ENCODE measurements at regions of chr12 and their contacts with region 1.

Region 1: DNA sequence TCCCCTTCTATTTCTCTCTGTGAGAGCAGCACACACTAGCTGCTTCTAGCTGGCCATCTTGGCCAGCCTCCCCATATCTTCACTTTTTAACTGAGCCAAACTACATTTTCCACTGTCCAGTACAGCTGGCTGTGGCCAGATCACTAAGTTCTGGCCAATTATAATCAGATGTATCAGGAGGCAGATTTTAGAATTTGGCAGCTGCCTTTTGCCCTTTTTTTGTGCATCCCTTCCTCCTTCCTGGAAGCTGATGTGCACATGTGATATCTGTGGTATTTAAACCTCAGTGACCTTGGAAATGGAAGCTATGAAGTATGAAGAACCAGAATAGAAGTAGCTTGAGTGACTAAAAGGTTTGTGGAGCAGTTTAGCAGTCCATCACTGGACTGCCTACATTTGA is 49.8 kb upstream of the ANO6 start:
- DNase-seq: no peak
- ATAC-seq: peak; percentile 12
- H3K4me3 ChIP-seq: no peak overlapping the region
- H3K27ac ChIP-seq: no peak overlapping the region
- H3K4me1 ChIP-seq: no peaks in the 10 kb centered on the region
- H3K27me3 ChIP-seq: no peaks in the 10 kb centered on the region
- CTCF ChIP-seq: no peak
- POLR2A ChIP-seq: no peak

Region 2: DNA sequence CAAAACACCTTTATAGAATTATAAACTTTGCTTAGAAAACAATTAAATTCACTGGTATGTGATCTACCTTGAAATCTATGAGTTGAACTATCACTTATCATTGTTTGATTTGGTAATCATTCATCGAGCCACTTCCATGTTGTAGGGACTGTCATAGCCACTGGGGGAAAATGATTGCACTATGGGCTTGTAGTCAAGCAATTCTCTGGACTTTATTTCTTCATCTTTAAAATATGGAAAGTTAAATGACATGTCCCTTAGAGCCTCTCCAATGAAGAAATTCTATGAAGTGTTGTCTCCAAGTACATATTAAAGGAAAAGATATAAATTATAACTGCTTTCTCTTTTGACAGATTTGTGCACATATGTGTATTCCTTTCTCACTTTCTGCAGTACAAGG is 387.2 kb before region 1 on chr12:
- intact Hi-C with region 1: no loop called
- DNase-seq: no peak
- ATAC-seq: no peak
- H3K4me3 ChIP-seq: no peak overlapping the region
- H3K27ac ChIP-seq: no peak overlapping the region
- H3K4me1 ChIP-seq: no peaks in the 10 kb centered on the region
- H3K27me3 ChIP-seq: no peaks in the 10 kb centered on the region
- CTCF ChIP-seq: no peak
- POLR2A ChIP-seq: no peak

Region 3: DNA sequence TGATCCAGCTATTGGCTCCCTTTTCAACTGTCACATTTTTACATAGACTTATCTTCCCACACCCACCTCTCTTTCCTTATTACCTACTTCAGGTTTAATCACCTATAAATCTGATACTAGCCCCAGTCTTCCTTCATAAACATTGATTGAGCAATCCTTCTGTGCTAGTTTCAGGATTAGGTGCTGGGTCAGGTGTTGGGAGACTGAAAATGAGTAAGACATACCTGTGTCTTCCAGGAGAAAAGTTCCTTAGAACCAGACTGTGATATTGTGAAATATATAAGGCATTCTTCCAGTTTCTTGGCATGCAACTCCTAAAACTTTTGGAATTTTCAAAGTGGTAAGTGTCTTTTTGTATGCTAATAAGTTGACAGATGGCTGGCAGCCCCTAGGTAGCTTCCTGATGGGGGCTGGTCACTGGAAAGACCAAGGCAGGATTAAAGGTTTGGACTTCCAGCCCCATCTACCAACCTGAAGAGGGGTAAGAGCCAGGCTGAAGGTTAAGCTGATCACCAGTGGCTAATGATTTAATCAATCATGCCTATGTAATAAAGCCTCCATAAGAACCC is 54.4 kb after region 1 on chr12:
- intact Hi-C with region 1: no loop called
- DNase-seq: no peak
- ATAC-seq: no peak
- H3K4me3 ChIP-seq: no peak overlapping the region
- H3K27ac ChIP-seq: no peak overlapping the region
- H3K4me1 ChIP-seq: peaks cover 35% of the 10 kb centered on the region
- H3K27me3 ChIP-seq: no peaks in the 10 kb centered on the region
- CTCF ChIP-seq: no peak
- POLR2A ChIP-seq: no peak

Region 4: GRCh38 chr12:45388545-45388944 is 222.5 kb after region 1 on chr12:
- intact Hi-C with region 1: loop called (anchors 10 kb)
- DNase-seq: peak in 1 of 4 donors; percentile 21
- ATAC-seq: no peak
- H3K4me3 ChIP-seq: no peak overlapping the region
- H3K27ac ChIP-seq: peak overlapping the region in 1 of 4 donors; percentile 6
- H3K4me1 ChIP-seq: peaks cover 8% of the 10 kb centered on the region
- H3K27me3 ChIP-seq: no peaks in the 10 kb centered on the region
- CTCF ChIP-seq: peak; percentile 20 to 61 (median 52)
- POLR2A ChIP-seq: no peak

Measured in body of pancreas (tissue), 4 donors.